ENCODE measurements at regions of chr13 and their contacts with region 1.

Region 1: GRCh38 chr13:39602614-39603366 is at the start of gene LHFPL6:
- DNase-seq: peak; percentile 3
- ATAC-seq: peak; percentile 96
- H3K4me3 ChIP-seq: peak within 1 kb of the TSS; percentile 50 to 72 (median 52); a peak in 5 of 6 replicates
- H3K27ac ChIP-seq: no peak within 1 kb of the TSS
- H3K4me1 ChIP-seq: peaks cover 6% of the 10 kb centered on the region
- H3K27me3 ChIP-seq: peaks cover 4 to 43% of the 10 kb centered on the region in 2 experiments; a peak in 4 of 5 replicates
- CTCF ChIP-seq: peak; percentile 36
- EP300 ChIP-seq: no peak
- POLR2A ChIP-seq: no peak
- RAD21 ChIP-seq: no peak
- total RNA-seq, gene LHFPL6: not detected in 2 replicates

Region 2: DNA sequence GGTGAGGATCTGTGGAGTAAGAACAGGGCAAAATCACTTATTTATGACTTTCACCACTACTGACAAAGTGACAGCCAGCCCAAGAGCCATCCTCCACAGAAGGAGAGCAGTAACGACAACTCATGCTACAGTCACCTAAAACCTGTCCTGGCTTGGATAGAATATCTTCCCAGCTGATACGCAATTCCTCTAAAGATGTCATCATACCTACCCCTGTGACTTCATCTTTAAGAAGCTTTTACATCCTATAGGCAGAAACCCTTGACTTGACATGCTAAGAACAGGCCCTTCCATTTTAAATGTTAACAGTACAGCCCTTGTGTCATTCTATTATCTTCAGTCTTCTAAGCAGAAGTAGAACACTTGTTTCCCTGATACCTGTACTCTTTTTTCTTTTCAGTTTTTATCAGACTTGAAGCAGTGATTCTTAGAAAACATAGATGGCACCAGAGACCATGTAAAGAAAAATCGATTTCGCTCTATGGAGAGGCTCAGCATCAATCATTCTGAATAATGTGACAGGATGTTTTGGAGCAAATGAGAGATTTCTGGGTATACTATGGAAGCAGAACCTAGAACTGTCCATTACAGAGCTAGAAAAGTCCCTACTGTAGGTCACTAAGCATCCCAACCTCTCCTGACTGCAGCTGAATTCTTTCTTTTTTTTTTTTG is 632.3 kb before region 1 on chr13:
- CTCF ChIA-PET with region 1: no interaction called
- POLR2A ChIA-PET with region 1: no interaction called
- in situ Hi-C with region 1: loop called (anchors 25 kb)
- intact Hi-C with region 1: no loop called
- DNase-seq: no peak
- ATAC-seq: peak; percentile 52
- H3K4me3 ChIP-seq: no peak overlapping the region
- H3K27ac ChIP-seq: no peak overlapping the region
- H3K4me1 ChIP-seq: no peaks in the 10 kb centered on the region
- H3K27me3 ChIP-seq: no peaks in the 10 kb centered on the region
- CTCF ChIP-seq: peak; percentile 50
- EP300 ChIP-seq: no peak
- POLR2A ChIP-seq: no peak
- RAD21 ChIP-seq: no peak

Region 3: GRCh38 chr13:39051157-39051556 is 551.6 kb before region 1 on chr13:
- CTCF ChIA-PET with region 1: no interaction called
- POLR2A ChIA-PET with region 1: no interaction called
- in situ Hi-C with region 1: loop called (anchors 25 kb)
- intact Hi-C with region 1: no loop called
- DNase-seq: peak; percentile 13
- ATAC-seq: no peak
- H3K4me3 ChIP-seq: no peak overlapping the region
- H3K27ac ChIP-seq: no peak overlapping the region
- H3K4me1 ChIP-seq: no peaks in the 10 kb centered on the region
- H3K27me3 ChIP-seq: no peaks in the 10 kb centered on the region
- CTCF ChIP-seq: peak; percentile 32; the same call in 1 of the 2 replicates
- EP300 ChIP-seq: no peak
- POLR2A ChIP-seq: no peak
- RAD21 ChIP-seq: no peak

Region 4: DNA sequence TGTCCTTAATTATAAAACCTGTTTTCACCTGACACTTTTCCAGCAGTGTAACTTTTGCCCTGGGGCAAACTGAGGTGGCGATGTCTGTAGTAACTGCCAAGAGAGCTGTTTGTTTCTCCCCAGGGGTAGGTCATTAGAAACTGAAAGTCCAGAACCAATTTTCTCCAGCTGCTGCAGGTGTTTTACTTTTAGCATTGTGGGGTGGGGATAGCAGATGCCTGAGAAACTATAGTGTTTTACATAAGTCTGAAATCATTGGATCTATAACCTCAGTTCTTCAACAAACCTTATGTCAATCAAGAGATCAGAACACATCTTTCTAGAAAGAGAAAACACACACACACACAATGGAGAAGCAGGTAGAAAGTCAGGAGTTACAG is 92.5 kb before region 1 on chr13:
- CTCF ChIA-PET with region 1: no interaction called
- POLR2A ChIA-PET with region 1: no interaction called
- in situ Hi-C with region 1: no loop called
- intact Hi-C with region 1: no loop called
- DNase-seq: no peak
- ATAC-seq: no peak
- H3K4me3 ChIP-seq: no peak overlapping the region
- H3K27ac ChIP-seq: no peak overlapping the region
- H3K4me1 ChIP-seq: no peaks in the 10 kb centered on the region
- H3K27me3 ChIP-seq: peaks cover 0 to 2% of the 10 kb centered on the region in 2 experiments; a peak in 1 of 5 replicates
- CTCF ChIP-seq: no peak
- EP300 ChIP-seq: no peak
- POLR2A ChIP-seq: no peak
- RAD21 ChIP-seq: no peak

Region 5: DNA sequence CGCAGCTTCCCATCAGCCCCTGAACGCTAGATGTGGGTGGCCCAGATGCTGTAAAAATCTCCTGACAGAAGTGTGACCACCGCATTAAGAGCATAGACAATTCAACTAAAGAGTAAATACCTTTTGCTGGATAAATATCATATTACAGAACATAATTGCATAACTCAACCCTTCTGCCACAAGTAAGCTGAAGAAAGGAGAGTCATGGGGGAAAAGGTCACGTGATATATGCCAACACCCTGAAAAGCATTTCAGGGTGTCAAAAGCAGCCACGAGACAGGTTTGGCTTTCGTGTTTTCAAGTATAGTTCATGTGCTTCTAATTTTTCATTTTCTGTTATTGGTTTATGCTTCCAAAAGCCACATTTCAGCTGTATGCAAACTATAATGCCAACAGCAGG is 71.1 kb before region 1 on chr13:
- CTCF ChIA-PET with region 1: no interaction called
- POLR2A ChIA-PET with region 1: no interaction called
- in situ Hi-C with region 1: no loop called
- intact Hi-C with region 1: no loop called
- DNase-seq: no peak
- ATAC-seq: no peak
- H3K4me3 ChIP-seq: no peak overlapping the region
- H3K27ac ChIP-seq: no peak overlapping the region
- H3K4me1 ChIP-seq: no peaks in the 10 kb centered on the region
- H3K27me3 ChIP-seq: no peaks in the 10 kb centered on the region
- CTCF ChIP-seq: no peak
- EP300 ChIP-seq: no peak
- POLR2A ChIP-seq: no peak
- RAD21 ChIP-seq: no peak

Region 6: DNA sequence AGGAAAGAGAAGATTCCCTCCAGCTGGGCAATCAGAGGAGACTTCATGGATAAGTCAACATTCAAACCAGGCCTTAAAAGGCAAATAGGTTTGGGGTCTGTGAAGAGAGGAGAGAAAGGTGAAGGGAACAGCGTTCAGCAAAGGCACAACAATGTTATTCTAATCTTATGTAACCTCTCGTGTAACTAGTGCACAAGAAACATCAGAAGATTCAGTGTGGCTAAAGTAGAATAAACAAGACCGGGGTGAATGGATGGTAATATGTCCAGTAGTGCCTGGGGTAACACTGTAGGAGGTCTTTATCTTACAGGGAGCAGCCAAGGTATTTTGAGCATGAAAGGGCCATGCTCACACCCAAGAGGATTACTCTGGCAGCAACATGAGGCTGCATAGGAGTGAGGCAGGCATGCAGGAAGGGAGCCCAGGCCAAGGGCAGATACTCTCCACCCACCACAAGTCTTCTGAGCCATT is 23.9 kb before region 1 on chr13:
- CTCF ChIA-PET with region 1: no interaction called
- POLR2A ChIA-PET with region 1: no interaction called
- in situ Hi-C with region 1: no loop called
- intact Hi-C with region 1: no loop called
- DNase-seq: no peak
- ATAC-seq: no peak
- H3K4me3 ChIP-seq: no peak overlapping the region
- H3K27ac ChIP-seq: no peak overlapping the region
- H3K4me1 ChIP-seq: no peaks in the 10 kb centered on the region
- H3K27me3 ChIP-seq: no peaks in the 10 kb centered on the region
- CTCF ChIP-seq: no peak
- EP300 ChIP-seq: no peak
- POLR2A ChIP-seq: no peak
- RAD21 ChIP-seq: no peak

Region 7: GRCh38 chr13:39641645-39642044 is 38.9 kb after region 1 on chr13:
- CTCF ChIA-PET with region 1: no interaction called
- POLR2A ChIA-PET with region 1: no interaction called
- in situ Hi-C with region 1: no loop called
- intact Hi-C with region 1: no loop called
- DNase-seq: no peak
- ATAC-seq: no peak
- H3K4me3 ChIP-seq: no peak overlapping the region
- H3K27ac ChIP-seq: no peak overlapping the region
- H3K4me1 ChIP-seq: no peaks in the 10 kb centered on the region
- H3K27me3 ChIP-seq: peaks cover 1 to 7% of the 10 kb centered on the region in 2 experiments; a peak in 2 of 5 replicates
- CTCF ChIP-seq: no peak
- EP300 ChIP-seq: no peak
- POLR2A ChIP-seq: no peak
- RAD21 ChIP-seq: no peak